ENCODE measurements at regions of chr19 and their contacts with region 1.

Region 1: GRCh38 chr19:39554701-39555311 is 14.8 kb upstream of the EID2 start:
- DNase-seq: no peak
- ATAC-seq: no peak
- H3K4me3 ChIP-seq: no peak overlapping the region
- H3K27ac ChIP-seq: no peak overlapping the region
- H3K4me1 ChIP-seq: peaks cover 7% of the 10 kb centered on the region
- H3K27me3 ChIP-seq: no peaks in the 10 kb centered on the region
- CTCF ChIP-seq: no peak

Region 2: GRCh38 chr19:39671738-39672363 is 117.0 kb after region 1 on chr19:
- intact Hi-C with region 1: loop called (anchors 1 to 5 kb)
- DNase-seq: no peak
- ATAC-seq: peak; percentile 58 to 84 (median 68)
- H3K4me3 ChIP-seq: no peak overlapping the region
- H3K27ac ChIP-seq: no peak overlapping the region
- H3K4me1 ChIP-seq: peaks cover 4% of the 10 kb centered on the region
- H3K27me3 ChIP-seq: no peaks in the 10 kb centered on the region
- CTCF ChIP-seq: peak; percentile 71

Region 3: GRCh38 chr19:39759457-39760184 is 204.8 kb after region 1 on chr19:
- intact Hi-C with region 1: loop called in 1 of 2 experiments (anchors 5 kb)
- DNase-seq: no peak
- ATAC-seq: no peak
- H3K4me3 ChIP-seq: no peak overlapping the region
- H3K27ac ChIP-seq: no peak overlapping the region
- H3K4me1 ChIP-seq: no peaks in the 10 kb centered on the region
- H3K27me3 ChIP-seq: peaks cover 0 to 12% (median 0%) of the 10 kb centered on the region in 3 donors
- CTCF ChIP-seq: no peak

Measured in psoas muscle (tissue), 8 donors.